ENCODE measurements at regions of chr19 and their contacts with region 1.

Region 1: DNA sequence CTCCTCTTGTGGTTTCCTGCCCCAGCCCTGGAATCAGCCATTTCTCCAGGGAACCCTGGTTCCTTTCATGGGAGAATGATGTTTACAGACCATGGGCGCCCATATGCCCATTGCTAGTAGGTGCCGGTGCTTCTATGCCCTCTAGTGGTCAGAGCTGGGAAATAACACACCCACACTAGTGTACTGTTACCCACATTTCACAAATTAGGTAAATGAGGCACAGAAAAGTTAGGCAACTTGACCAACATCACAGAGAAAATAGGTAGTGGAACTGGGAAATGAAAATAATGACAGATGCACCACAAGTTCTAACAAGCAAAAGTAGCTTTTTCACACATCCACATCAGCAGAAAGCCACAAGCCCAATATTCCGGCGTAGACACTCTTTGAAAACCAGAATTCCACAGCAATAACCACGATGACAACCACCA is 1.3 kb upstream of the CEACAM3 start:
- DNase-seq: peak; percentile 81
- H3K4me3 Mint-ChIP-seq: no peak overlapping the region
- H3K27ac Mint-ChIP-seq: no peak overlapping the region
- H3K4me1 Mint-ChIP-seq: no peaks in the 10 kb centered on the region
- H3K27me3 Mint-ChIP-seq: peaks cover 18% of the 10 kb centered on the region

Region 2: DNA sequence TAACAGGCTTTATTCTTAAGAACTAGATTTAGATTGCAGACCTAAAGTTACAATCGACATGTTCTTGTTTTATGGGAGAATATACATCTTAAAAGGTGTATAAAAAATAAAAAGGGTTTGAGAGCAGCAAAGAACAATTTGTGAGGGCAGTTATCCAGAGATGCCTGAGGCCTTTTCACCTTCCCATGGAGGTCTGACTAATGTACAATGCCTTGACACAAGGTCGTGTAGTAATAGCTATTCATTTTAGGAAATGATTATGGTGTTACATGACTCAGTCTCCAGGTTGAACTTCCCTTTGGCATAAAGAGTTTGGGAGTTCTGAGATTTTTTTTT is 19.7 kb before region 1 on chr19:
- CTCF ChIA-PET with region 1: interaction called, 16 read pairs
- intact Hi-C with region 1: no loop called
- DNase-seq: no peak
- H3K4me3 Mint-ChIP-seq: no peak overlapping the region
- H3K27ac Mint-ChIP-seq: no peak overlapping the region
- H3K4me1 Mint-ChIP-seq: peaks cover 36% of the 10 kb centered on the region
- H3K27me3 Mint-ChIP-seq: peaks cover 73% of the 10 kb centered on the region

Region 3: GRCh38 chr19:41811036-41811435 is 16.0 kb after region 1 on chr19:
- CTCF ChIA-PET with region 1: interaction called, 51 read pairs
- intact Hi-C with region 1: no loop called
- DNase-seq: no peak
- H3K4me3 Mint-ChIP-seq: no peak overlapping the region
- H3K27ac Mint-ChIP-seq: no peak overlapping the region
- H3K4me1 Mint-ChIP-seq: peaks cover 5% of the 10 kb centered on the region
- H3K27me3 Mint-ChIP-seq: no peaks in the 10 kb centered on the region

Region 4: DNA sequence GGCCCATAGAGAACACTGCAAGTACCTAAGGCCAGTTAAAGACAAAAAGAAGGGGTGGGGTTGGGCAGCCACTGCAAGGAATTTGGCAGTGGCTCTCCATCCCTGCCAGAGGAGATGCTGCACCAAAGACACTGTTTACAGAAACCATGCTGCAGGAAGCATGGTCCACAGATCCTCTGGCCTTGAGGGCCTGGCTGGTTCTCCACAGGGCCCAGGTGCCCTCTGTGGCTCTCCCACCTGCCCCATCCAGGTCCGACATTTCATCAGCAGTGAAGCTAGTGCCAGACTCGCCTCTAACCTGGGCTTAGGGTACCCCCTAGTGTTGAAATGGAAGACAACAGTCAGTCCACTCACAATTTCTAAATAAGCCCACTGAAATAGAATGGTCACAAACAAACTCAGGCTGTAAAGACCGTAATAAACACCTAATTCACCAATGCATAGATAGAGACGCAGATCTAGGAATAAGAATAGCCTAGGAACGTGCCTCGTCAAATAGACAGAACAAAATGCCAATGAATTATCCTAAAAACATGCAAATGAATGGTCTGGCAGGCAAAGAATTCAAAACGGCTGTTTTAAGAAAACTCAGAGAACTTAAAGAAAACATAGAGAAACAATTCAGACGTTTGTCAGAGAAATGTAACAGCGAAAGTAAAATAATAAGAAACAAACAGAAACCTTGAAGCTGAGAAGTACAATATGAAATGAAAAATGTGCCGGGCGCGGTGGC is 26.1 kb after region 1 on chr19:
- CTCF ChIA-PET with region 1: interaction called, 74 read pairs
- intact Hi-C with region 1: loop called (anchors 1 kb)
- DNase-seq: peak; percentile 72
- H3K4me3 Mint-ChIP-seq: no peak overlapping the region
- H3K27ac Mint-ChIP-seq: no peak overlapping the region
- H3K4me1 Mint-ChIP-seq: no peaks in the 10 kb centered on the region
- H3K27me3 Mint-ChIP-seq: peaks cover 5% of the 10 kb centered on the region

Region 5: GRCh38 chr19:41837981-41838708 is 43.1 kb after region 1 on chr19:
- CTCF ChIA-PET with region 1: interaction called, 25 read pairs
- intact Hi-C with region 1: no loop called
- DNase-seq: no peak
- H3K4me3 Mint-ChIP-seq: no peak overlapping the region
- H3K27ac Mint-ChIP-seq: no peak overlapping the region
- H3K4me1 Mint-ChIP-seq: no peaks in the 10 kb centered on the region
- H3K27me3 Mint-ChIP-seq: peaks cover 3% of the 10 kb centered on the region

Region 6: GRCh38 chr19:41951686-41952172 is 156.7 kb after region 1 on chr19:
- CTCF ChIA-PET with region 1: interaction called, 5 read pairs
- intact Hi-C with region 1: loop called (anchors 2 kb)
- DNase-seq: peak; percentile 95
- H3K4me3 Mint-ChIP-seq: no peak overlapping the region
- H3K27ac Mint-ChIP-seq: peak overlapping the region; percentile 63
- H3K4me1 Mint-ChIP-seq: peaks cover 14% of the 10 kb centered on the region
- H3K27me3 Mint-ChIP-seq: no peaks in the 10 kb centered on the region